T-cell (primary cell): ENCODE measurements at regions of chr4 and their contacts with region 1.

Region 1: GRCh38 chr4:88284439-88285234 is at the start of gene PPM1K:
- DNase-seq: peak; percentile 97 to 100 (median 99)
- ATAC-seq: peak; percentile 87 to 90 (median 89)
- H3K4me3 ChIP-seq: peak within 1 kb of the TSS; percentile 75 to 85
- H3K4me3 Mint-ChIP-seq: peak within 1 kb of the TSS; percentile 97 to 99 (median 99)
- H3K27ac ChIP-seq: peak within 1 kb of the TSS; percentile 91
- H3K27ac Mint-ChIP-seq: peak within 1 kb of the TSS; percentile 98 to 99
- H3K4me1 ChIP-seq: peaks cover 21 to 24% of the 10 kb centered on the region in 2 experiments
- H3K4me1 Mint-ChIP-seq: peaks cover 42 to 52% (median 51%) of the 10 kb centered on the region in 3 donors
- H3K27me3 ChIP-seq: no peaks in the 10 kb centered on the region
- H3K27me3 Mint-ChIP-seq: no peaks in the 10 kb centered on the region
- total RNA-seq, gene PPM1K: 74.2 to 91.1 (median 84.8) TPM

Region 2: GRCh38 chr4:88177961-88178625 is 106.5 kb before region 1 on chr4:
- CTCF ChIA-PET with region 1: no interaction called
- POLR2A ChIA-PET with region 1: no interaction called
- DNase-seq: peak in 1 of 35 experiments; percentile 11
- ATAC-seq: no peak
- H3K4me3 ChIP-seq: no peak overlapping the region
- H3K4me3 Mint-ChIP-seq: no peak overlapping the region
- H3K27ac ChIP-seq: no peak overlapping the region
- H3K27ac Mint-ChIP-seq: no peak overlapping the region
- H3K4me1 ChIP-seq: no peaks in the 10 kb centered on the region
- H3K4me1 Mint-ChIP-seq: peaks cover 0 to 6% (median 5%) of the 10 kb centered on the region in 3 donors
- H3K27me3 ChIP-seq: peaks cover 0 to 6% of the 10 kb centered on the region in 2 experiments
- H3K27me3 Mint-ChIP-seq: peaks cover 0 to 21% of the 10 kb centered on the region in 2 donors

Region 3: GRCh38 chr4:88341227-88342192 is 56.9 kb after region 1 on chr4:
- CTCF ChIA-PET with region 1: no interaction called
- POLR2A ChIA-PET with region 1: interaction called, 4 to 12 read pairs
- DNase-seq: no peak
- ATAC-seq: no peak
- H3K4me3 ChIP-seq: no peak overlapping the region
- H3K4me3 Mint-ChIP-seq: no peak overlapping the region
- H3K27ac ChIP-seq: no peak overlapping the region
- H3K27ac Mint-ChIP-seq: no peak overlapping the region
- H3K4me1 ChIP-seq: no peaks in the 10 kb centered on the region
- H3K4me1 Mint-ChIP-seq: no peaks in the 10 kb centered on the region
- H3K27me3 ChIP-seq: no peaks in the 10 kb centered on the region
- H3K27me3 Mint-ChIP-seq: no peaks in the 10 kb centered on the region

Region 4: GRCh38 chr4:88456757-88457306 is 172.2 kb after region 1 on chr4 and contains the start of gene HERC5:
- CTCF ChIA-PET with region 1: interaction called in 1 of 2 experiments, 7 read pairs
- POLR2A ChIA-PET with region 1: interaction called in 1 of 2 experiments, 25 read pairs
- DNase-seq: peak; percentile 80 to 96 (median 90)
- ATAC-seq: peak; percentile 95 to 97 (median 96)
- H3K4me3 ChIP-seq: peak within 1 kb of the TSS; percentile 97 to 99
- H3K4me3 Mint-ChIP-seq: peak within 1 kb of the TSS; percentile 85 to 100 (median 100)
- H3K27ac ChIP-seq: peak within 1 kb of the TSS; percentile 79
- H3K27ac Mint-ChIP-seq: peak within 1 kb of the TSS; percentile 100
- H3K4me1 ChIP-seq: peaks cover 0 to 16% of the 10 kb centered on the region in 2 experiments
- H3K4me1 Mint-ChIP-seq: peaks cover 32 to 53% (median 43%) of the 10 kb centered on the region in 3 donors
- H3K27me3 ChIP-seq: no peaks in the 10 kb centered on the region
- H3K27me3 Mint-ChIP-seq: no peaks in the 10 kb centered on the region
- total RNA-seq, gene HERC5: 8.1 to 15.5 (median 11.4) TPM

Region 5: GRCh38 chr4:88591787-88592599 is 307.4 kb after region 1 on chr4 and contains the start of gene HERC3:
- CTCF ChIA-PET with region 1: interaction called in 1 of 2 experiments, 9 read pairs
- POLR2A ChIA-PET with region 1: interaction called in 1 of 2 experiments, 13 read pairs
- DNase-seq: peak; percentile 76 to 93 (median 86)
- ATAC-seq: peak; percentile 88 to 92 (median 90)
- H3K4me3 ChIP-seq: peak within 1 kb of the TSS; percentile 62 to 97
- H3K4me3 Mint-ChIP-seq: peak within 1 kb of the TSS; percentile 91 to 97 (median 94)
- H3K27ac ChIP-seq: peak within 1 kb of the TSS; percentile 83
- H3K27ac Mint-ChIP-seq: peak within 1 kb of the TSS; percentile 89 to 91
- H3K4me1 ChIP-seq: peaks cover 12 to 19% of the 10 kb centered on the region in 2 experiments
- H3K4me1 Mint-ChIP-seq: peaks cover 41 to 46% (median 41%) of the 10 kb centered on the region in 3 donors
- H3K27me3 ChIP-seq: no peaks in the 10 kb centered on the region
- H3K27me3 Mint-ChIP-seq: no peaks in the 10 kb centered on the region
- total RNA-seq, gene HERC3: 68.4 to 91.5 (median 73.6) TPM